ENCODE measurements at regions of chr21 and their contacts with region 1.

Region 1: DNA sequence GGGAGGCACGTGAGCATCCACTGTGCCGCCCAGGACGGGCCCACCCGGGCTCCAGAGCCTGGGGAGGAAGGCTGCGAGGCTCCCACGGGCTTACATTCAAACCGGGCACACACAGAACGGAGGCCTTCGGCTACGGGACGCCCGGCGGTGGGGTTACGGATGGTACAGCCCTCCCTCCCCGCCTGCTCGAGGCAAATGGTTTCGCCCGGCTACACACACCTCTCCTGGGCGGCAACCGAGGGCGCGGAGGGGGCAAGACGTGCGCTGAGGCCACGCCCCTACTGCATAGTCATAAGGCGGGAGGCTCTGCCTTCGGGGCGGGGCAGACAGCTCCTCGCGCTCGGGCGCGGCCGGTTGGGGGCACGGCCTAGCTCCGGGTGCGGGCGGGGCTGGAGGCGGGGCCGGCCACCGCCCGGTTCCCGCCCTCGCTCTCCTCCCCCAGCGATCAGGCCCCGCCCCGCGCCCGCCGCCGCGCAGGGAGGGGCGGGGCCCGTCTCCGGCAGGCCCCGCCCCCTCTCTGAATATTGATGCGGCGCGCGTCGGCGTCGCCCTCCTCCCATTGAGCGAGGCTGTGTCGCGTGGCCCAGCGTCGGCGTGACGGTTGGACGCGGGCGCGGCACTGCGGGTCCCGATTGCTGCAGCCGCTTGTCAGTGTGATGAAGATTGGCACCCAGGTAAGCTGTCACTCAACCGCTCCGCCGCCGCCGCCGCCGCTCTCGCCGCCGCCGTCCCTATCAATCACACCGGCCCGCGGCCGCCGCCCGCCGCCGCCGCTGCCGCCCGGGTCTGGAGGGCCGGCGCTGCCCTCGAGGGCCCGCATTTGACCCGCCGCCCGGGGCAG is at the start of gene PKNOX1:
- DNase-seq: peak; percentile 99
- H3K4me3 ChIP-seq: peak within 1 kb of the TSS; percentile 73
- H3K27ac ChIP-seq: peak within 1 kb of the TSS; percentile 94
- H3K4me1 ChIP-seq: peaks cover 7% of the 10 kb centered on the region
- H3K27me3 ChIP-seq: no peaks in the 10 kb centered on the region
- CTCF ChIP-seq: no peak
- total RNA-seq, gene PKNOX1: 30.6 and 33.8 TPM in 2 replicates

Region 2: DNA sequence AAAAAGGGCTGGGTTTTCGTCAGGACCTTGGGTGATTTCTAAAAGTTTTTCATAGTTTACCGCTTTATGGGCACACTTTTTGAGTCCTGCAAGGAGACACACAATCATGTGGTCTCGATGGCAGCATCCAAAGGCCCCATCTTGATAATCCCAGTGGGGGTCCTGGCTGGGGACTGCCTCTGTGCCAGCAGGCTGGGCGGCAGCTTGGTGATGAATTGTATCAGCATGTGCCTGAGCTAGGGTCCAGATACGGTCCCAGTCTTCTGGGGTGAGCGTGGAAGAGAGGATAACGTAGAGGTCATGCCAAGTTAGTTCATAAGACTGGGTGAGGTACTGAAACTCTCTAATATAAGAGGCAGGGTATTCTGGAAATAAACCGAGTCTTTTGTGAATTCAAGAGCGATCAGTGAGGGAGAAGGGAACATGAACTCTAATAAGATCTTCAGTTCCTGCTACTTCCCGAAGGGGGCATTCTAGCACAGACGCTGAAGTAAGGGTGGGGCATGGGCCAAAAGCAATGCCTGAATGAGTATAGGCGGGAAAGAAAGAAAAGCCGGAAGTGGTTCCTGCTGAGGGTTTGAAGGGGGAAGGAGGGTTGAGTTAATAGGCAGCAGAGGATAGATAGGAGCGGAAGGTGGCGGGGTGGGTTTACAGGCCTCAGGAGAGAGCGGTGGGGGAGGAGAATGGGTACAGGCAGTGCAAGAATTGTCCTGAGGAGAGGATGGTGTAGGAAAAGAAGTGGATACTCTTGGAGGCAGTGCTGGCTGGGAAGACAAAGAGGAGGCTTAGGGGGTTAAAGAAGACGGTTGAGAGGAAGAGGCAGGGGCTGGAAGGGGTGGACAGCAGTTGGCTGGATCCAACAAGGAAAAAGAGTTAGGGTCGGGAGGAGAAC is 50.4 kb before region 1 on chr21:
- CTCF ChIA-PET with region 1: no interaction called
- POLR2A ChIA-PET with region 1: no interaction called
- intact Hi-C with region 1: loop called (anchors 5 kb)
- DNase-seq: peak; percentile 99
- H3K4me3 ChIP-seq: no peak overlapping the region
- H3K27ac ChIP-seq: peak overlapping the region; percentile 70
- H3K4me1 ChIP-seq: peaks cover 19% of the 10 kb centered on the region
- H3K27me3 ChIP-seq: no peaks in the 10 kb centered on the region
- CTCF ChIP-seq: peak; percentile 87

Measured in A673 (cell line).